B cell (primary cell): ENCODE measurements at regions of chr17 and their contacts with region 1.

Region 1: GRCh38 chr17:76523084-76524037 is 14.1 kb downstream of the CYGB start:
- DNase-seq: peak; percentile 89
- ATAC-seq: peak; percentile 51
- H3K4me3 ChIP-seq: no peak overlapping the region
- H3K4me3 Mint-ChIP-seq: peak overlapping the region; percentile 61
- H3K27ac ChIP-seq: no peak overlapping the region
- H3K27ac Mint-ChIP-seq: peak overlapping the region; percentile 78
- H3K4me1 ChIP-seq: peaks cover 20 to 31% of the 10 kb centered on the region in 2 donors
- H3K4me1 Mint-ChIP-seq: peaks cover 29% of the 10 kb centered on the region
- H3K27me3 ChIP-seq: peaks cover 0 to 11% (median 1%) of the 10 kb centered on the region in 4 experiments
- H3K27me3 Mint-ChIP-seq: peaks cover 3% of the 10 kb centered on the region
- CTCF ChIP-seq: peak; percentile 99

Region 2: DNA sequence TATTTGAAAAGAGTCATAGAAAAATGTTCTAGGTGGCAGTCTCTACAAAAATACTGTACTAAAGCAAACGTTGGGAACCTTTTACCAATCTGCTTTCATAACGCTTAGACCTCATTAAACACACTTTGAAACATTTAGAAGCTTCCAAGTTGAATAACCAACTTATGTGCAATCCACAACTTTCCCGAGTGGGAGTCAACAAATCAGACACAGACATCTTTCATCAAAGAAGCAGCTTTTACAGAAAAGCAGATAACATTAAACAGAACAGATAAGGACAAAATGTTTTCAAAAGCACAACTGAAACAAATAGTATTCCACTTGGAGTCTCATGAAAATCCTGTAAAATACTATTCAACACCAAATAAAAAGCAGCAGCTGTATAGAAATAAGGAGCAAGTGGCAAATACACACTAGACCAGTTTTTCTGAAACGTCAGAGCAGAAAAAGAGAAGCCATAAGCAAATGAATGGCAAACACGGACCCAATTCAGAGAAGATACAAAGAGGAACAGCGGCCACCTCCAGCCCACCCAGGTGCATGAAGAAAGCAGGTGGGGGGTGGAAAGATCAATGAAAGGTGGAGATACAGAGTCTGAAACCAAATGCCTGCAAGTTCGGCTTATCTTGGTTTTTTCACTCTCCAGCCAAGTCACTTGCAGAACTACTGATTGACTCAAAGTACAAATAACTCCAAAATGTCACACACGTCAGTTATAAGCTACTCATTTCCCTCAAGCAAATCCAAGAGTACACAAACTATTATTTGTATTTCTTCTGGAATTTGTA is 564.1 kb before region 1 on chr17:
- CTCF ChIA-PET with region 1: no interaction called
- POLR2A ChIA-PET with region 1: no interaction called
- intact Hi-C with region 1: no loop called
- DNase-seq: no peak
- ATAC-seq: no peak
- H3K4me3 ChIP-seq: no peak overlapping the region
- H3K4me3 Mint-ChIP-seq: no peak overlapping the region
- H3K27ac ChIP-seq: no peak overlapping the region
- H3K27ac Mint-ChIP-seq: no peak overlapping the region
- H3K4me1 ChIP-seq: peaks cover 0 to 4% of the 10 kb centered on the region in 2 donors
- H3K4me1 Mint-ChIP-seq: peaks cover 3% of the 10 kb centered on the region
- H3K27me3 ChIP-seq: no peaks in the 10 kb centered on the region
- H3K27me3 Mint-ChIP-seq: no peaks in the 10 kb centered on the region
- CTCF ChIP-seq: no peak

Region 3: DNA sequence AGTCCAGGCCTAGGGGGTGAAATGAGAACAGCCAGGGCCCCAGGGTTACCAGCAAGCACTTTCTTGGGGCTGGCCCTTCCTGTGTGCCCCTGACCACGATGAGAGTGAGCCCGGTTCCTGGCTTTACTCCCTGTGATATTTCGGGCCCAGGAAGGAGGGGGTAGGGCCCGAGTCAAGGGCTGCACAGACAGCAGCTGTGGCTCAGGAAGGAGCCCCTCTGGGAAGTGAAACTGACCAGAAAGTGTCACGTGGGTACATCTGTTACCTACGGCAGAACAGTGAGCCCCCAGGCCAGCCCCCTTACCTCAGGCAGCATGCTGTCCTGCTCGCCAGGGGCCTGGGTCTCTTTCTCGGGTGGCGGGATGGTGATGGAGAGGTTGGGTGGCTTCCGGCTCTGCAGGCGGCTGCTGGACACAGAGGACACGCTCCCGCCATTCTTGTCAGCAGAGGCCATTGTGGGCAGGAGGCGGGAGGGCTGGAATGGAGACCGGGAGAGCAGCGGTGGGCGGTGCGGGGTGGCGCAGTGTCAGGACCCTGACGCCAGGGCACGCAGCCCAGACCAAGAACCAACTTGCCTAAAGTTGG is 42.2 kb before region 1 on chr17:
- CTCF ChIA-PET with region 1: interaction called, 3 read pairs
- POLR2A ChIA-PET with region 1: interaction called, 4 read pairs
- intact Hi-C with region 1: loop called (anchors 1 kb)
- DNase-seq: peak; percentile 88
- ATAC-seq: peak; percentile 57
- H3K4me3 ChIP-seq: peak overlapping the region; percentile 15 to 70 (median 53)
- H3K4me3 Mint-ChIP-seq: peak overlapping the region; percentile 81
- H3K27ac ChIP-seq: peak overlapping the region; percentile 91 to 96
- H3K27ac Mint-ChIP-seq: peak overlapping the region; percentile 99
- H3K4me1 ChIP-seq: peaks cover 63 to 87% of the 10 kb centered on the region in 2 donors
- H3K4me1 Mint-ChIP-seq: peaks cover 67% of the 10 kb centered on the region
- H3K27me3 ChIP-seq: no peaks in the 10 kb centered on the region
- H3K27me3 Mint-ChIP-seq: no peaks in the 10 kb centered on the region
- CTCF ChIP-seq: no peak

Region 4: GRCh38 chr17:76506408-76507349 is 16.7 kb before region 1 on chr17:
- CTCF ChIA-PET with region 1: interaction called, 43 read pairs
- POLR2A ChIA-PET with region 1: interaction called, 11 read pairs
- intact Hi-C with region 1: no loop called
- DNase-seq: peak; percentile 92
- ATAC-seq: peak; percentile 73
- H3K4me3 ChIP-seq: no peak overlapping the region
- H3K4me3 Mint-ChIP-seq: no peak overlapping the region
- H3K27ac ChIP-seq: no peak overlapping the region
- H3K27ac Mint-ChIP-seq: peak overlapping the region; percentile 50
- H3K4me1 ChIP-seq: peaks cover 14 to 28% of the 10 kb centered on the region in 2 donors
- H3K4me1 Mint-ChIP-seq: peaks cover 28% of the 10 kb centered on the region
- H3K27me3 ChIP-seq: no peaks in the 10 kb centered on the region
- H3K27me3 Mint-ChIP-seq: peaks cover 2% of the 10 kb centered on the region
- CTCF ChIP-seq: peak; percentile 87

Region 5: DNA sequence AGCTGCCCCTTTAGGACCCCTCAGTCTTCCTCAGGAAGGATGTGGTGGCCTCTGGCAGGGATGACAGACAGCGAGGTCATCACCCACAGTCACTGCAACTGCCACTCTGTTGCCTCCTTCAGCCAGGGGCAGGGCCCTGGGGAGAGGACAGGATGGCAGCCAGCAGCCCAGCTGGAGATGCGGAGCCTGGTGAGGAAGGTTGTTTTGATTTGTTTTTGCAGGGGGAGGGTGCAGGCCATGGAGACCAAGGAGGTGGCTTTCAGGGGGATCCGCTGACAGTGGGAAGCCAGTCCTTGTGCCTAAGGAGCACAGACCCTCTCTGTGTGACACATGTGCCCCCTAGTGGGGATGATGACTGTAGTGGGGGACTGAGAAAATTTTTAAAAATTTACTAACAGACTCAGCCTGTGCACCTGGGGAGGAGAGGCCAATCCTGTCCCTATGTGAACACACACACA is 23.9 kb after region 1 on chr17:
- CTCF ChIA-PET with region 1: interaction called, 156 read pairs
- POLR2A ChIA-PET with region 1: interaction called, 7 read pairs
- intact Hi-C with region 1: loop called (anchors 1 kb)
- DNase-seq: peak; percentile 78
- ATAC-seq: peak; percentile 90
- H3K4me3 ChIP-seq: no peak overlapping the region
- H3K4me3 Mint-ChIP-seq: no peak overlapping the region
- H3K27ac ChIP-seq: no peak overlapping the region
- H3K27ac Mint-ChIP-seq: no peak overlapping the region
- H3K4me1 ChIP-seq: peaks cover 4 to 8% of the 10 kb centered on the region in 2 donors
- H3K4me1 Mint-ChIP-seq: peaks cover 7% of the 10 kb centered on the region
- H3K27me3 ChIP-seq: peaks cover 0 to 7% (median 3%) of the 10 kb centered on the region in 4 experiments
- H3K27me3 Mint-ChIP-seq: peaks cover 17% of the 10 kb centered on the region
- CTCF ChIP-seq: peak; percentile 66

Region 6: DNA sequence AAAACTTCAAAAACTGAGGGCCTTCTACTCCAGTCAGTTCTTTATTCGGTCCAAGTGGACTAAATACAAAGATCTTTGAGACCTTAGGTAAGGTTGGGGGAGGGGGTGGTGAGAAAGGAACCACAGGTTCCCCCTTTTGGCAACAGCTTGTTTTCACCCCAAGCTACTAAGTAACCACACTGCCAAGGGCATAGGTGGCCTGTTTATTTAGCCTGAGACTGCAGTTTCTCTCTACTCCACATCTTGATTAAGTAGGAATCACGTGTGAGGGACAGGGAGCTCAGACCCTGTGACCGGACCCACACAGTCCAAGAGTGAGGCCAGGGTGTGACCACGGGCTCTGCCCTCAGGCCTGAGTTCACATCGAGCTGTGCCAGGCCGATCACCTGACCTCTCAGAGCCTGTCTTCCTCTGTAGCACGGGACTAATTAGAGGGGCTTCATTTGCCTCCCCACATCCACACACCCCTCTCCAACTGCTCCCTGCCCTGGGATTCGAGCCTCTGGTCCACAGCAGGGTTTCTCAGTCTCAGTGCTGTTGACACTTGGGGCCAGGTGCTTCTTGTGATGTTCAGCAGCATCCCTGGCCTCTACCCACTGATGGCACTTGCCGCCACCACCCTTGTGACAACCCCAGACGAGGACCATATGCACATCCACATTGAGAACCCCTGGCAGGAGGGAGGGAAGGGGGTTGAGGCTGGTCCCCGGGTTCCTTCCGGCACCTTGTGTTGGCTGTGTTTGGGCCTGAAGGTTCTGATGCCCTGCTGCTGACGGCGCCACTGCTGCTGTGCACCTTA is 44.5 kb after region 1 on chr17:
- CTCF ChIA-PET with region 1: interaction called, 11 read pairs
- POLR2A ChIA-PET with region 1: interaction called, 3 read pairs
- intact Hi-C with region 1: no loop called
- DNase-seq: peak; percentile 71
- ATAC-seq: peak; percentile 82
- H3K4me3 ChIP-seq: no peak overlapping the region
- H3K4me3 Mint-ChIP-seq: peak overlapping the region; percentile 41
- H3K27ac ChIP-seq: peak overlapping the region; percentile 31 to 56
- H3K27ac Mint-ChIP-seq: peak overlapping the region; percentile 88
- H3K4me1 ChIP-seq: peaks cover 19 to 21% of the 10 kb centered on the region in 2 donors
- H3K4me1 Mint-ChIP-seq: peaks cover 29% of the 10 kb centered on the region
- H3K27me3 ChIP-seq: no peaks in the 10 kb centered on the region
- H3K27me3 Mint-ChIP-seq: no peaks in the 10 kb centered on the region
- CTCF ChIP-seq: no peak

Region 7: GRCh38 chr17:76671123-76671911 is 148.0 kb after region 1 on chr17:
- CTCF ChIA-PET with region 1: interaction called, 4 read pairs
- POLR2A ChIA-PET with region 1: no interaction called
- intact Hi-C with region 1: loop called (anchors 5 kb)
- DNase-seq: peak; percentile 99
- ATAC-seq: peak; percentile 99
- H3K4me3 ChIP-seq: peak overlapping the region; percentile 66 to 92 (median 84)
- H3K4me3 Mint-ChIP-seq: peak overlapping the region; percentile 92
- H3K27ac ChIP-seq: peak overlapping the region; percentile 80 to 81
- H3K27ac Mint-ChIP-seq: peak overlapping the region; percentile 93
- H3K4me1 ChIP-seq: peaks cover 10 to 18% of the 10 kb centered on the region in 2 donors
- H3K4me1 Mint-ChIP-seq: peaks cover 25% of the 10 kb centered on the region
- H3K27me3 ChIP-seq: peaks cover 0 to 3% (median 1%) of the 10 kb centered on the region in 4 experiments
- H3K27me3 Mint-ChIP-seq: peaks cover 13% of the 10 kb centered on the region
- CTCF ChIP-seq: no peak

Region 8: GRCh38 chr17:76726231-76726775 is 202.9 kb after region 1 on chr17 and contains the start of gene JMJD6:
- CTCF ChIA-PET with region 1: no interaction called
- POLR2A ChIA-PET with region 1: no interaction called
- intact Hi-C with region 1: loop called (anchors 1 kb)
- DNase-seq: no peak
- ATAC-seq: peak; percentile 83
- H3K4me3 ChIP-seq: peak within 1 kb of the TSS; percentile 67 to 92 (median 84)
- H3K4me3 Mint-ChIP-seq: peak within 1 kb of the TSS; percentile 99
- H3K27ac ChIP-seq: peak within 1 kb of the TSS; percentile 98 to 99
- H3K27ac Mint-ChIP-seq: peak within 1 kb of the TSS; percentile 99
- H3K4me1 ChIP-seq: peaks cover 30 to 52% of the 10 kb centered on the region in 2 donors
- H3K4me1 Mint-ChIP-seq: peaks cover 50% of the 10 kb centered on the region
- H3K27me3 ChIP-seq: no peaks in the 10 kb centered on the region
- H3K27me3 Mint-ChIP-seq: no peaks in the 10 kb centered on the region
- CTCF ChIP-seq: no peak
- total RNA-seq, gene JMJD6: 38.2 and 41.1 TPM in 2 replicates